ENCODE measurements at regions of chr5 and their contacts with region 1.

Region 1: DNA sequence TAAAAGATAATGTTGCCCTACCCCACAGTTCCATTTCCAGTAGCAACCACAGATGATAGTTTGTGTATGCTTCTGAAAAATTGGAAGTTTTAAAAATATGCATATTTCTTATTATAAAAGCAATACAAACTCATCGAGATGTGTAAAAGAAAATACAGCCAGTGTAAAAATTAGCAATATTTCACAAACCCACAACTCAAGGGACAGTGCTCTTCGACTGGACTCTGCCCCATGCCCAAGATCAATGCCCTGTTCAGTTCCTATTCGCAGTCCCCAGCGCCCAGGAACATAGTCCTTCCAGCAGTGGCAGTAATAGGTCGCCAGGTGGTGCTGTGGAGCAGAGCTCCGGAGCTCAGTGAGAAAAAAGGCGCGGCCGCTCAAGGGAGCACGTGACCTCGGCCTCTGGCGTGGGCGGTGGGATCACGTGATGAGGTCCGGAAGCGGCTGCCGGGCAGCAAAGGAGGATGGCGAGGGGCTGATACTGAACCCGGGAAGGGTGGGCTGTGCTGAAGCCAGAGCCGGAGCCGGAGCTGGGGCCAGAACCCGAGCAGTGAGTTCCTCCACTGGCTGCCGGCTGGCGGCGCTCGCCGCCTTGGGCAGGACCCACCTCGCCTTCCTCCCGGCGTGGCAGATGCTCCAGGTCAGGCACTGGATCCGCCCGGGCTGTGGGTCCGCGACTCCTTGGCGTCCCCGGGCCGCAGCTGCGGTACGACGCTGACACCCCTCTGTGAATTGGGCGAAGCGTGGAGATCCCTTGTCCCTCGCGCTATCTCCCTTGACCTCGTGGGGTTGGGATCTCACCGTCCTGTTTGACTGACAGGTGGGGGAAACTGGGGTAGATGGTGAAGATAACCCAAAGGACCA is at the start of gene SLC36A1:
- DNase-seq: peak; percentile 84
- ATAC-seq: peak; percentile 90
- H3K4me3 ChIP-seq: peak within 1 kb of the TSS; percentile 79 to 94 (median 94)
- H3K27ac ChIP-seq: no peak within 1 kb of the TSS
- H3K4me1 ChIP-seq: peaks cover 52% of the 10 kb centered on the region
- H3K27me3 ChIP-seq: no peaks in the 10 kb centered on the region; a peak in 1 of 5 replicates
- CTCF ChIP-seq: peak; percentile 96
- EP300 ChIP-seq: peak in 1 of 2 experiments; percentile 42; a peak in 1 of 4 replicates
- POLR2A ChIP-seq: peak; percentile 54 to 69; a peak in 3 of 4 replicates
- RAD21 ChIP-seq: peak; percentile 96
- total RNA-seq, gene SLC36A1: 5.5 and 8.0 TPM in 2 replicates

Region 2: GRCh38 chr5:151463137-151464029 is 16.0 kb after region 1 on chr5:
- CTCF ChIA-PET with region 1: interaction called, 31 read pairs
- POLR2A ChIA-PET with region 1: interaction called, 10 read pairs
- in situ Hi-C with region 1: no loop called
- intact Hi-C with region 1: loop called (anchors 1 kb)
- DNase-seq: peak; percentile 33
- ATAC-seq: peak; percentile 77
- H3K4me3 ChIP-seq: no peak overlapping the region
- H3K27ac ChIP-seq: no peak overlapping the region
- H3K4me1 ChIP-seq: no peaks in the 10 kb centered on the region
- H3K27me3 ChIP-seq: no peaks in the 10 kb centered on the region
- CTCF ChIP-seq: peak; percentile 67
- EP300 ChIP-seq: no peak
- POLR2A ChIP-seq: no peak
- RAD21 ChIP-seq: peak; percentile 45; the same call in 1 of the 2 replicates

Region 3: GRCh38 chr5:151499501-151500035 is 52.2 kb after region 1 on chr5:
- CTCF ChIA-PET with region 1: interaction called, 37 read pairs
- POLR2A ChIA-PET with region 1: no interaction called
- in situ Hi-C with region 1: loop called (anchors 5 kb)
- intact Hi-C with region 1: loop called (anchors 1 kb)
- DNase-seq: no peak
- ATAC-seq: no peak
- H3K4me3 ChIP-seq: no peak overlapping the region
- H3K27ac ChIP-seq: no peak overlapping the region
- H3K4me1 ChIP-seq: no peaks in the 10 kb centered on the region
- H3K27me3 ChIP-seq: no peaks in the 10 kb centered on the region
- CTCF ChIP-seq: no peak
- EP300 ChIP-seq: no peak
- POLR2A ChIP-seq: no peak
- RAD21 ChIP-seq: no peak

Region 4: DNA sequence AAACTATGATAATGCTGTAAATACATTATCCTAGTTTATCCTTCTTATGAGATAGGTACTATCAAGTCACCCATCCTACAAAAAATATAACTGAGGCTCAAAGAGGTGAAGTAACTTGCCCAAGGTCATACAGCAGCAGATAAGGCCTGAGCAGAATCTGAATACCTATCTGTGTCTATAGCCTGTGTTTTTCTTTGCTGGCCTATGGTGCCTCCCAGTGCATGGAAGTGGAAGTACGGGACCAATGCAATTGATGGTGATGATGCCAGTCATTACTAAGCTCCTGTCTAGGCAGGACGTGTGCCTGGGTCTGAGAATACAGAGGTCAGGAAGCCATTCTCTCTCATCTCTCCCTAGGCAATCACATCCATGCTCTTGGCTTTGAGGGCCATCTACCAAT is 75.9 kb after region 1 on chr5:
- CTCF ChIA-PET with region 1: no interaction called
- POLR2A ChIA-PET with region 1: no interaction called
- in situ Hi-C with region 1: no loop called
- intact Hi-C with region 1: loop called (anchors 1 kb)
- DNase-seq: peak; percentile 60
- ATAC-seq: peak; percentile 92
- H3K4me3 ChIP-seq: no peak overlapping the region
- H3K27ac ChIP-seq: no peak overlapping the region
- H3K4me1 ChIP-seq: no peaks in the 10 kb centered on the region
- H3K27me3 ChIP-seq: peaks cover 0 to 12% of the 10 kb centered on the region in 2 experiments; a peak in 3 of 5 replicates
- CTCF ChIP-seq: peak; percentile 73
- EP300 ChIP-seq: no peak
- POLR2A ChIP-seq: no peak
- RAD21 ChIP-seq: peak; percentile 69

Region 5: DNA sequence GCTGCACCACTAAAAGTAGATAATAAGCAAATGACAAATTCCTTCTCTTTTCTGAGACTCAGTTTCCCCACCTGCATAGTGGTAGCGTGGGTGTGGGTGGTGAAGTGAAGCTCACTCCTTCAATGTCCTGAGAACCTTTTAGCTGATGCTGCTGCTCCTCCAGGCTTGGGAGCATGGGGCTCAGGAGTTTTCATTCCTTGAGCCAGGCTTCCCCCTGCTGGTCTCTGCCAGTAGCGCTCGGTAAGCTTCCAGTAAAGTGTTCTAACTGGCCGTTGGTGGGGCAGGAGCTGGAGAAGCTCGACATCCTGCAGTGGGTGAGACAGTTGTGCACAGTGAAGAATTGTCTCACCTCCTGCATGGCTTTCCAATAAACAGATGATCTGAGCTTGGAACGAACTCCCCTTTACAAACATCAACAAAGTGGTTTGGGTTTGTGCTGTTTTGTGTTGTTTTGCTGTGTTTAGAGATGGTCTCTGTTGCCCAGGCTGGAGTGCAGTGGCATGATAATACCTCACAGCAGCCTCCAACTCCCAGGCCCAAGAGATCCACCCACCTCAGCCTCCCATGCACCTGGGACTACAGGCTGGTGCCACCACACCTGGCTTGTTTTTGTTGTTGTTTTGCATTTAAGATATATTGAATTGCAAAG is 204.7 kb after region 1 on chr5:
- CTCF ChIA-PET with region 1: interaction called, 15 read pairs
- POLR2A ChIA-PET with region 1: interaction called, 7 read pairs
- in situ Hi-C with region 1: loop called (anchors 5 kb)
- intact Hi-C with region 1: loop called (anchors 1 kb)
- DNase-seq: peak; percentile 65
- ATAC-seq: peak; percentile 99
- H3K4me3 ChIP-seq: no peak overlapping the region
- H3K27ac ChIP-seq: no peak overlapping the region
- H3K4me1 ChIP-seq: peaks cover 5% of the 10 kb centered on the region
- H3K27me3 ChIP-seq: peaks cover 0 to 12% of the 10 kb centered on the region in 2 experiments; a peak in 3 of 5 replicates
- CTCF ChIP-seq: peak; percentile 94
- EP300 ChIP-seq: no peak
- POLR2A ChIP-seq: no peak
- RAD21 ChIP-seq: peak; percentile 91

Region 6: DNA sequence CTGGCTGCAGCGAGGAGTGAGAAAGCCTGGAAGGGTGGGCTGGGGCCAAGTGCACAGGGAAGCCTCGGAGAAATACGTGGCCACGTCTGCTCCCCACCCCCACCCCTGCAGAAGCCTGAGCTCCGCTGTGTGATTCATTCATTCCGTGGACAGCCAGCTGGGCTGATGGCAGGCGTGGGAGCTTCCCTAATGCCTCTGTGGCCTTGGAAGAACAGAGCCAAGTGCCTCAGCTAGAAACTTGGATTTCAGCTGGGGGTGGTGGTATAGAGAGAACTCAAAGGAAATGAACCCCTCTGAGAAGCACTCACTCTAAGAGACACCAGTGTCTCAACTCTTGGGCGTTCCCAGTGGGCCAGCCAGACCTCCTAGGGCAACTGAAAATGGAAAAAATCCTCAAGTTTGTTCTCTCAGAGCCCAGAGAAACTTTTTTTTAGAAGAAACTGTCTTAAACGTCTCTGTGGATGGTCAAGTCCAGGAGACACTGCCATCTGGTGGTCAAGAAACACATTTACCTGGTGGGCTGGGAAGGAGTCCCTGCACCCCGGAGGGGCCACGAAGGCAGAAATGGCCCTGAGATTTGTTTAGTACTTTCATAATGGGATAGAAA is 293.0 kb after region 1 on chr5:
- CTCF ChIA-PET with region 1: no interaction called
- POLR2A ChIA-PET with region 1: no interaction called
- in situ Hi-C with region 1: loop called (anchors 25 kb)
- intact Hi-C with region 1: loop called (anchors 5 kb)
- DNase-seq: peak; percentile 30
- ATAC-seq: peak; percentile 74
- H3K4me3 ChIP-seq: no peak overlapping the region
- H3K27ac ChIP-seq: no peak overlapping the region
- H3K4me1 ChIP-seq: no peaks in the 10 kb centered on the region
- H3K27me3 ChIP-seq: no peaks in the 10 kb centered on the region
- CTCF ChIP-seq: peak; percentile 76
- EP300 ChIP-seq: no peak
- POLR2A ChIP-seq: no peak
- RAD21 ChIP-seq: peak; percentile 54; the same call in 1 of the 2 replicates

Region 7: GRCh38 chr5:151758430-151759241 is 311.2 kb after region 1 on chr5 and contains the start of gene ATOX1:
- CTCF ChIA-PET with region 1: no interaction called
- POLR2A ChIA-PET with region 1: no interaction called
- in situ Hi-C with region 1: no loop called
- intact Hi-C with region 1: loop called (anchors 5 kb)
- DNase-seq: peak; percentile 85
- ATAC-seq: peak; percentile 91
- H3K4me3 ChIP-seq: peak within 1 kb of the TSS; percentile 69 to 91 (median 82)
- H3K27ac ChIP-seq: peak within 1 kb of the TSS; percentile 68
- H3K4me1 ChIP-seq: peaks cover 54% of the 10 kb centered on the region
- H3K27me3 ChIP-seq: no peaks in the 10 kb centered on the region
- CTCF ChIP-seq: peak; percentile 41
- EP300 ChIP-seq: no peak
- POLR2A ChIP-seq: peak; percentile 82 to 96
- RAD21 ChIP-seq: no peak; the same call in 1 of the 2 replicates
- total RNA-seq, gene ATOX1: 124 and 146 TPM in 2 replicates